Calu3 (cell line): ENCODE measurements at regions of chr1 and their contacts with region 1.

Region 1: GRCh38 chr1:65419681-65420589 is 533 bp upstream of the LEPR start:
- DNase-seq: peak; percentile 99
- H3K4me3 Mint-ChIP-seq: no peak overlapping the region
- H3K27ac Mint-ChIP-seq: no peak overlapping the region
- H3K4me1 Mint-ChIP-seq: peaks cover 31% of the 10 kb centered on the region
- H3K27me3 Mint-ChIP-seq: no peaks in the 10 kb centered on the region
- CTCF ChIP-seq: no peak

Region 2: DNA sequence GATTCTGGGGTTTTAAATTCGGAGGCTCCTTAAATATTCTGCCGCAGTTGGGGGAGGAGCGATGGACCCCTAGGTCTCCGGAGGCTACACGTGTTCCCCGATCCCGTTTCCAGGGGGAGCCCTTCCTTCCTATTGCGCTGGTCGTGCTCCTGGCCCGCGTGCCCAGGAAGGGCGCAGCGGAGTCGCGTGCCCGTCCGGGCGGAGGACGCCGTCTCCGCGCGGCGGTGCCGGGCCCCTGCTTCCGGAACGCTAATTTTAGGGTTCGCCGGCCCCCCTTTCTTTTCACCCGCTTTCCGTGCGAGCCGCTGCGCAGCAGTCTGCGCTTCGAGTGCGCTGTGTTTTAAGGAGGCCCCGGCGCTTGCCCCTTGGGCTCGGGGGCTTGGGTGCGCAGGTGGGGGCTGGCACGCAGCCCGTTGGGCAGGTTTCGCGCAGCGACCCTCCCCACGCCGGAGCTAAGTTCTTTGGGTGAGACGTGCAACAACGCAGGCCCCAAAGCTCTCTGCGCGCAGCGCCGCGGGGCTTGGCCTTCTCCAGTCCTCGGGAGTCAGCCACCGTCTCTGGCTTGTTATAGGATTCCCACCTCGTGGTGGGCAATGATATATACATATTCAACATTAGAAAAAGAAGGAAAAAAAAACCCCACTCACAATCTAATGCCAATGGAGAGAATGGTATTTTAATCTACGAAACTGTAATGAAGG is 154.1 kb before region 1 on chr1:
- CTCF ChIA-PET with region 1: interaction called, 4 read pairs
- intact Hi-C with region 1: loop called (anchors 5 kb)
- DNase-seq: peak; percentile 67
- H3K4me3 Mint-ChIP-seq: peak overlapping the region; percentile 82
- H3K27ac Mint-ChIP-seq: peak overlapping the region; percentile 87
- H3K4me1 Mint-ChIP-seq: peaks cover 12% of the 10 kb centered on the region
- H3K27me3 Mint-ChIP-seq: no peaks in the 10 kb centered on the region
- CTCF ChIP-seq: no peak

Region 3: GRCh38 chr1:65309304-65310077 is 110.4 kb before region 1 on chr1 and contains the start of gene DNAJC6:
- CTCF ChIA-PET with region 1: interaction called, 6 read pairs
- intact Hi-C with region 1: loop called (anchors 5 kb)
- DNase-seq: peak; percentile 86
- H3K4me3 Mint-ChIP-seq: peak within 1 kb of the TSS; percentile 72
- H3K27ac Mint-ChIP-seq: no peak within 1 kb of the TSS
- H3K4me1 Mint-ChIP-seq: no peaks in the 10 kb centered on the region
- H3K27me3 Mint-ChIP-seq: no peaks in the 10 kb centered on the region
- CTCF ChIP-seq: no peak
- total RNA-seq, gene DNAJC6: 2.9 and 3.1 TPM in 2 replicates